Activated naive CD4-positive, alpha-beta T cell treated with anti-CD3 and anti-CD28 coated beads for 36 hours (primary cell): ENCODE measurements at regions of chrX and their contacts with region 1.

Region 1: DNA sequence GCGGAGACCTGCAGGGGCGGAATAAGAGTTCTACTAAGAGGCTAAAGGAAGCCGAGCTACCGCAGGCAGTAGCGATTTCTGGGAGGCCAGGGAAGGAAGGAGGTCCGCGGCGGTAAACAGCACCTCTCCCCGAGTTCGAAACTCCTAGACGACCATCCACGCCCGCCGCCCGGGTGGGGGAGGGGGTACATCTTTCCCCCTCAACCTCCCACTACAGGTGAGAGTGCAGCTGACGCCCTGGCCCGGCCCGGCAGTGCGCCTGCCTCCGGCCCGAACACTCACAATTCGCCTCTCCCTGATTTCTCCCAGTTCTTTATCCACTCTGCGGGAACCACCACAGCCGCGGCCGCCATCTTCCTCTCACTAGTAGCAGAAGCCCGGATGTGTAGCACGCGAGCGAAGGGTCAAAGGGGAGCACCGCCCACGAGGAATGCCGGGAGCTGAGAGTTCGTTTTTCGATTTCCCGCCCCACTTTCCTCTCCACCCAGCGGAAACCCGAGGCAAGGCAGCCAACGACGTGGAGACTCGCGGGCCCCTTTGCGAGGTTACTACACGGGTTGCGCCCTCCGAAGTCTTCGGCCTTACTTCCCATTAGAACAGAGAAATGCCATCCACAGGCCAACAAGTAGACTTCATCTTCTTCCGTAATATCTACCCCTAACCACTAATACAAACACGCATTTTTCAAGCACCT is at the start of gene THOC2:
- DNase-seq: peak; percentile 85
- H3K4me3 Mint-ChIP-seq: peak within 1 kb of the TSS; percentile 91
- H3K27ac Mint-ChIP-seq: peak within 1 kb of the TSS; percentile 93
- H3K4me1 Mint-ChIP-seq: peaks cover 24% of the 10 kb centered on the region
- H3K27me3 Mint-ChIP-seq: no peaks in the 10 kb centered on the region
- total RNA-seq, gene THOC2: 78.2 to 79.9 TPM

Region 2: GRCh38 chrX:123193101-123193500 is 539.7 kb before region 1 on chrX:
- CTCF ChIA-PET with region 1: no interaction called
- intact Hi-C with region 1: no loop called
- DNase-seq: no peak
- H3K4me3 Mint-ChIP-seq: no peak overlapping the region
- H3K27ac Mint-ChIP-seq: no peak overlapping the region
- H3K4me1 Mint-ChIP-seq: no peaks in the 10 kb centered on the region
- H3K27me3 Mint-ChIP-seq: peaks cover 6% of the 10 kb centered on the region

Region 3: DNA sequence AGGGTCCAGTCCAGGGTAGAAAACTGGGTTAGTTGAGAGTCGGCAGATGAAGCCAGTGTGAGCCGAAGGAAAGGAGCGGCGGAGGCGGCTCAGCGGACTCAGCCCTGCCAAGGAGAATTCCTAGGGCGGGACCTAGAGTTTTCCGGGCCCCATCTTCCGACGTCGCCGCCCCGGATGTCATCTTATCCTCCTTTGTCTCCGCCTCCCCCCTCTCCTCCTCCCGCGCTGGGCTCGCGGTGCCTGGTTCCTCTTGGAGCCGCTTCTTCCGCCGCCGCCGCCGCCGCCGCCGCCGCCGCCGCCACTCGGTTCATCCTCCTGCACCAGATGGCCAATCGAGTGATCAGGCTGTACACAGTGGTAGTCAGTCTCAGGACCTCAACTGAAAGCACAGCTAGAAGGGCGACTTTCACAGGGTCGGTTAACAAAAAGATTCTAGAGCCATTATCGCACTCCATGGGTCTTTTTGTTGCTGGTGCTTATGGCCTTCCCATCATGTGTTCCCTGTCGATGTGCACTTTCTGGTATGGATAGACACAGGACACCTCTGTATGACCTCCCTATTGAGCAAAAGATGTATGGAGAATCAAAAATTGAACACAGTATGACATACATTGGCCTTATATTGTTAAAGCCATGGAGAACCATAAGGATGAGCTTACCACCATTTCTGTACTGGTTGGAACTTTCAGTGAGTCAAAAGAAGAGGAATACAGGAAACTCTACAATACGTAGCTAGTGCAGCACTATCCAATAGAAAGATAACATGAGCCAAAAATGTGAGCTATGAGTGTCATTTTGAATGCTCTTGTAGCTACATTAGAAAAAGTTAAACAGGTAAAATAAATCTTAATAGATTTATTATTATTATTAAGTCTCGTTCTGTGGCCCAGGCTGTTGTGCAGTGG is 32.4 kb after region 1 on chrX:
- CTCF ChIA-PET with region 1: no interaction called
- intact Hi-C with region 1: loop called (anchors 1 kb)
- DNase-seq: peak; percentile 79
- H3K4me3 Mint-ChIP-seq: peak overlapping the region; percentile 72
- H3K27ac Mint-ChIP-seq: peak overlapping the region; percentile 73
- H3K4me1 Mint-ChIP-seq: peaks cover 3% of the 10 kb centered on the region
- H3K27me3 Mint-ChIP-seq: no peaks in the 10 kb centered on the region

Region 4: GRCh38 chrX:123807835-123808416 is 75.1 kb after region 1 on chrX:
- CTCF ChIA-PET with region 1: no interaction called
- intact Hi-C with region 1: no loop called
- DNase-seq: no peak
- H3K4me3 Mint-ChIP-seq: no peak overlapping the region
- H3K27ac Mint-ChIP-seq: no peak overlapping the region
- H3K4me1 Mint-ChIP-seq: peaks cover 8% of the 10 kb centered on the region
- H3K27me3 Mint-ChIP-seq: no peaks in the 10 kb centered on the region

Region 5: GRCh38 chrX:123818243-123818642 is 85.4 kb after region 1 on chrX:
- CTCF ChIA-PET with region 1: no interaction called
- intact Hi-C with region 1: no loop called
- DNase-seq: no peak
- H3K4me3 Mint-ChIP-seq: no peak overlapping the region
- H3K27ac Mint-ChIP-seq: no peak overlapping the region
- H3K4me1 Mint-ChIP-seq: no peaks in the 10 kb centered on the region
- H3K27me3 Mint-ChIP-seq: no peaks in the 10 kb centered on the region

Region 6: GRCh38 chrX:123869488-123869887 is 136.7 kb after region 1 on chrX:
- CTCF ChIA-PET with region 1: no interaction called
- intact Hi-C with region 1: loop called (anchors 2 kb)
- DNase-seq: no peak
- H3K4me3 Mint-ChIP-seq: no peak overlapping the region
- H3K27ac Mint-ChIP-seq: peak overlapping the region; percentile 68
- H3K4me1 Mint-ChIP-seq: peaks cover 29% of the 10 kb centered on the region
- H3K27me3 Mint-ChIP-seq: no peaks in the 10 kb centered on the region